AG04449 (cell line): ENCODE measurements at regions of chr17 and their contacts with region 1.

Region 1: DNA sequence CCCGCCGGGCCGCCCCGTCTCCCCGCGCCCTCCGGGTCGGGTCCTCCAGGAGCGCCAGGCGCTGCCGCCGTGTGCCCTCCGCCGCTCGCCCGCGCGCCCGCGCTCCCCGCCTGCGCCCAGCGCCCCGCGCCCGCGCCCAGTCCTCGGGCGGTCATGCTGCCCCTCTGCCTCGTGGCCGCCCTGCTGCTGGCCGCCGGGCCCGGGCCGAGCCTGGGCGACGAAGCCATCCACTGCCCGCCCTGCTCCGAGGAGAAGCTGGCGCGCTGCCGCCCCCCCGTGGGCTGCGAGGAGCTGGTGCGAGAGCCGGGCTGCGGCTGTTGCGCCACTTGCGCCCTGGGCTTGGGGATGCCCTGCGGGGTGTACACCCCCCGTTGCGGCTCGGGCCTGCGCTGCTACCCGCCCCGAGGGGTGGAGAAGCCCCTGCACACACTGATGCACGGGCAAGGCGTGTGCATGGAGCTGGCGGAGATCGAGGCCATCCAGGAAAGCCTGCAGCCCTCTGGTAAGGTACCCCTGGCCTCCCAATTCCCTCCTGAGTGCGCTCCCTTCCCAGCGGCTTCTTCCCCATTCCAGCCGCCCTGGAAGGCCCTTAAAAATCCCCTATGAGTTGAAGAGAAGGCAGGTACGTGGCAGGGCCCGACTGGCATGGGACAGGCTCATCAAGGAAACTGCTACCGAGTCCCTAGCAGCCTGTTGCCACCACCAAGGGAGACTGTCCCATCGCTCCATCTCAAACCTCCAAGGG is 505 bp downstream of the IGFBP4 start:
- DNase-seq: no peak
- H3K4me3 ChIP-seq: peak overlapping the region; percentile 99
- CTCF ChIP-seq: peak; percentile 84

Region 2: DNA sequence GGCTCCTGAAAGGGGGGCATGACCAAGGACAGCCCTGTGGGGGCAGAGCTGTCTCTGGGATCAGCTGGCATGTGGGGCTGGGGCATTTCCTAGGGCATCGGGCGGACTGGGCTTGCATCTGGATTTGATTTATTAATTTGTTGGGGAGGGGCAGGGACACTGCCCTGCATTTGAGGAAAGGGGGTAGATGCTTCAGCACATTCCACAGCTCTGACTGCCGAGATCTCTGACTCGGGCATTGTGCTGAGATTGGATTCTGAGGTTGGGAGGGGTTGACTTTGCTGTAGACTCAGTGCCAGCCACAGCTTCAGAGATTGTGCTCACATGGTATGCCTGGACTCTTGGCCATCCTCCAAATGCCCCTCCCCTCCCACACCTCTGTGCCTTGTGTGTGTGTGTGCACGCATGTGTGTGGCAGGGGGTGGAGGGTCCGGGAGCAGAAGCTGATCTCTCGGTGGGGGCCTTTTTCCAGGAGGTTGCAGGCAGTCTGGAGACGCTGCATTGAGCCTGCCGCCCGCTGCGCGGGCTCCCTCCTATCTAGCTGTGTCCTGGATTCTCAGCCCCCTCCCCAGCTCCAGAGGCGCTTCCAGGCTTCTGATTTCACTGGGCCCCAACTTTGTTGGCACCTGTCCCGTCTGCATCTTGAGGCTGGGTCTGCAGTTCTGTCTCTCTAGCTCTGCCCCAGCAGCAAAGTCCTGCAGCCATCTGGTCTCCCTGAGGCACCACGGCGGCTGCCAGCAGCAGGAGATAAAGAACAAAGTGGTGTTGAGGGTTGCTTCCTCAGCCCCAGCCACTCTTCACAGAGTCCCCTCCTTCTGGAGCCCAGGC is 14.4 kb after region 1 on chr17:
- CTCF ChIA-PET with region 1: interaction called, 19 read pairs
- POLR2A ChIA-PET with region 1: interaction called, 13 read pairs
- DNase-seq: peak; percentile 63
- H3K4me3 ChIP-seq: no peak overlapping the region
- CTCF ChIP-seq: no peak

Region 3: DNA sequence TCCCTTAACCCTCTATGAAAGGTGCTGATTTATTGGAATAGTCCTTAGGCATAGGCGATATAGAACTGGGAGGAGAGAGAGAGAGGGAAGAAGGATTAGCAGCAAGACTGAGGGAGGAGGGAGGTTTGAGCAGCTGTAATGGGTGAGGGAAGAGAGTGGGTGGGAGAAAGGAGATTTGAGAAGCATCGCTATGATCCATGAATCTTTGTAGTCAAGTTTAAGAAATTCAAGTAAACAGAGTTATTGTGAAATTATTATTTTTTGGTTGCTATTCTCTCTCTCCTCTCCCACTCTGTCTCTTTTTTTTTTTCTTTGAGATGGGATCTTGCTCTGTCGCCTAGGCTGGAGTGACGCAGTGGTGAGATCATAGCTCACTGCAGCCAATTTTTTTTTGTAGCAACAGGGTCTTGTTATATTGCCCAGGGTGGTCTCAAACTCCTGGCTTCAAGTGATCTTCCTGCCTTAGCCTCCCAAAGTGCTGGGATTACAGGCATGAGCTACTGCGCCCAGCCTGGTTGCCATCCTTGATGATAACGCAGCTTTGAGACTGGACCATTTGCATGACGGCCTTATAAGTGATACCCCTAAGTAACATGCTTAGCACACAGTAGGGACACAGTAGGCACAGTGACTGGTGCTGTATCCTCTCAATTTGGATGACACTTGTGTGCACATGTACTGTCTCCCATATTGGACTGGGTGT is 78.6 kb after region 1 on chr17:
- CTCF ChIA-PET with region 1: interaction called, 13 read pairs
- POLR2A ChIA-PET with region 1: interaction called, 7 read pairs
- DNase-seq: no peak
- H3K4me3 ChIP-seq: no peak overlapping the region
- CTCF ChIP-seq: no peak

Region 4: DNA sequence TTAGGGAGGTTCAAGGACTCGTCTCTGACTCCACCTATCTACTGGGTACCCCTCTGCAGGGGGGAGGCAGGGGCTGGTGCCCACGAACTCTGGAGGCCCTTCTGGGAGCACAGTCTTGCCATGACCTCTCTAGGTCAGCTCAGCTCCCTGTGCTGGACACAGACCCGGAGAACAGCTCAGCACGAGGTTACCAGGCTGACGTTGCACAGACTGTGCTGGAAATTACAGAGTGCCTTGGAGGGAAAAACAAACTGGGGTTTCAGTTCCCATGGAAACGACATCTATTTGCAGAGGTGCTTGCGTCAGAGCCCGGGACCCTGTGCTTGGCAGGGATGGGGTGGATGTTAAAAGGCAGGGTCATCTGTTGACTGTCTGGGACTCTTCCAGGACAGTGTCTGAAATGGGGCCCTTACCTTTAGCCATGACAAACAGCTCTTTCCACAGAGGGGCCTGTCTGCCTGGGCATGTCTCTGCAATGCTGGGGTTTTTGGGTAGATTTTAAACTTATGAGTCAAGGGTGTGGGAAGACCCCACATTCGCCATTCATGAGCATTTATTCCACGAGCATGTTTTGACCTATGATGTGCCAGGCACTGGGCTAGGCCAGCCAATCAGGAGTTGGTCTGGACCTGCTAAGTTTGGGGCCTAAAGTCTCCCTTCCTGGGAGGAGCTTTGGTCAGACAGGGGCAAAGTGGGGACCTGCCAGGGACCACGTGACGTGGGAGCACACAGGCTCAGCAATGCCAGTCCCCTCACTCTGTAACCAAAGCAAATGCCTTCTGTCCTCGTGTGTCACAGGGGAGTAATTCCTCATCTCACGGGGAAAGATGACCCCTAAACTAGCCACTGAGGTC is 99.0 kb after region 1 on chr17:
- CTCF ChIA-PET with region 1: interaction called, 337 read pairs
- POLR2A ChIA-PET with region 1: interaction called, 3 read pairs
- DNase-seq: peak; percentile 88
- H3K4me3 ChIP-seq: no peak overlapping the region
- CTCF ChIP-seq: no peak

Region 5: GRCh38 chr17:40551879-40552768 is 108.4 kb after region 1 on chr17:
- CTCF ChIA-PET with region 1: interaction called, 20 read pairs
- POLR2A ChIA-PET with region 1: interaction called, 14 read pairs
- DNase-seq: peak; percentile 99
- H3K4me3 ChIP-seq: no peak overlapping the region; the same call in 1 of the 2 replicates
- CTCF ChIP-seq: no peak